ENCODE measurements at regions of chr12 and their contacts with region 1.

Region 1: DNA sequence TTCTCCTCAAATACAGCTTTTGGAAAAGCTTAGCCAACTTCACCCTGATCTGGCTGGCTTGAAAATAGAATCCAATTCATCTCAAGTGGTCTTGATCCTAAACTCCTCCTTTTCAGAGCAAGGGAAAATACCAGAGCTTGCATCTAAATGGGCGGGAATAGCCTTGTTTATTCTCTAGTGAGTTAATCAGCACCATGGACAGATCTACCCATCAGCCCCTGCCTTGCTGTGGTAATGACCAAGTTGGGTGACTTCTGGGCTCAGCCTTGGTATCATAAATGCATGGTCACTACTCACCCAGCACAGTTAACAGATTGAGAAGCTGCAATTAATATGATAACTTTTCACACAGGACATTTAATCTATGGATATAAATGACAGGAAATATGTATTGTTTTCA is 196.6 kb downstream of the GLT1D1 start:
- DNase-seq: no peak
- H3K4me3 ChIP-seq: no peak overlapping the region
- CTCF ChIP-seq: no peak

Region 2: GRCh38 chr12:128702374-128702773 is 347.5 kb before region 1 on chr12:
- in situ Hi-C with region 1: no loop called
- DNase-seq: no peak
- H3K4me3 ChIP-seq: no peak overlapping the region
- CTCF ChIP-seq: no peak

Region 3: GRCh38 chr12:128940974-128941373 is 108.9 kb before region 1 on chr12:
- in situ Hi-C with region 1: loop called (anchors 5 kb)
- DNase-seq: no peak
- H3K4me3 ChIP-seq: no peak overlapping the region
- CTCF ChIP-seq: no peak

Region 4: DNA sequence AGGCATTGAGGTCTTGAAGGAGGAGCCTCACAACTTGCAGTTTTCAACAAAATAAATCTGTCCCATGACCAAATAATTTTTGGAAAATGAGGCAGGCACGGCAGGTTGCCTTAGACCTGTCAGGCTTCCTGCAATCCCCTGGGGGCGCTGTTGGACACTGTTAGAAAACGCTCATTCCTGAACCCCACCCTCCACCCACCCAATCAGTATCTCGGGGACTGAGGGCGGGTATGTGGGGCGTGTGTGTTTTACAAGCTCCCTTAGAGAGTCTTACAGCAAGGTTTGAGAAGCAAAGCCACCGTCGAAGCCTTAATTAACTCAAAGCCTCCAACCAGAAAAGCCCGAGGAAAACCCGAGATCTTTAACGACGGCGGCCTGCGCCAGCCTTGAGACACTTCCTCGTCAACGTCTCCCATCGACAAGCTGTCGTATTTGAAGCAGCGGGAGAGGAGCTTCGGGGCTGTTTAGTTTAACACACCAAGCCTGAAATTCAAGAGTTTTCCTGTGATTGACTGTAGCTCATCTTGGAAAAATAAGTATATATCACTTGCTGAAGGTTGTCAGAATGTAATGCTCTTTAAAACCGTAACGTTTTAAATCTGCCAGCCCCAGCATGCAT is 73.7 kb before region 1 on chr12:
- in situ Hi-C with region 1: no loop called
- DNase-seq: no peak
- H3K4me3 ChIP-seq: no peak overlapping the region
- CTCF ChIP-seq: no peak

Measured in astrocyte of the cerebellum (primary cell).